Tibial artery (tissue), 4 donors: ENCODE measurements at regions of chr1 and their contacts with region 1.

Region 1: DNA sequence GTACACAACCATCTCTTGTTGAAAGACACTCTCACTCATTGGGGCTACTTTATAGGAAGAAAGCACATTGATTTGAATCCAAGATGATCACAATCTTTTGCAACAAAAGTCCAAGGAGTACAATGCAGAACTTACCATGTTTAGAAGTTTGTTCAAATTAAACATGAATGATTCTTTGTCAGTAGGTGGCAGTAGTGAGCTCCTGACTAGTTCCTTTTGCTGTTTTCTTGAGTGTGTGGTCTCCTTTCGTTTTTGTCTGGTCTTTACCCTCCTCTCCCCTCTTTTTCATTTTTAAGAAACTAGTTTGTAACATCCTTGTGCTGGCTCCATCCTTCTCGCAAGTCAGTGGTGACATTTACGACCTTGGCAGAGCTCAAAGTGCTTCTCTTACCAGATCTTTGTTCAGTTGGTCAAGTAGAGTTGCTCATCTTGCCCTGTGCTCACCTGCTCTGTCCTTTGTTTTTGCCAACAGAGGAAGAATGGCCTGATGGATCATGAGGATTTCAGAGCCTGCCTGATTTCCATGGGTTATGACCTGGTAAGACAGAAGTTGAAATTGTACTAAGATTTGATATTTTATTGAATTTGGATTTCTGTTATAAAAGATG is 35.7 kb upstream of the MTR start:
- DNase-seq: no peak
- H3K4me3 ChIP-seq: no peak overlapping the region
- H3K27ac ChIP-seq: no peak overlapping the region
- H3K4me1 ChIP-seq: no peaks in the 10 kb centered on the region
- H3K27me3 ChIP-seq: no peaks in the 10 kb centered on the region
- CTCF ChIP-seq: peak; percentile 53 to 66

Region 2: DNA sequence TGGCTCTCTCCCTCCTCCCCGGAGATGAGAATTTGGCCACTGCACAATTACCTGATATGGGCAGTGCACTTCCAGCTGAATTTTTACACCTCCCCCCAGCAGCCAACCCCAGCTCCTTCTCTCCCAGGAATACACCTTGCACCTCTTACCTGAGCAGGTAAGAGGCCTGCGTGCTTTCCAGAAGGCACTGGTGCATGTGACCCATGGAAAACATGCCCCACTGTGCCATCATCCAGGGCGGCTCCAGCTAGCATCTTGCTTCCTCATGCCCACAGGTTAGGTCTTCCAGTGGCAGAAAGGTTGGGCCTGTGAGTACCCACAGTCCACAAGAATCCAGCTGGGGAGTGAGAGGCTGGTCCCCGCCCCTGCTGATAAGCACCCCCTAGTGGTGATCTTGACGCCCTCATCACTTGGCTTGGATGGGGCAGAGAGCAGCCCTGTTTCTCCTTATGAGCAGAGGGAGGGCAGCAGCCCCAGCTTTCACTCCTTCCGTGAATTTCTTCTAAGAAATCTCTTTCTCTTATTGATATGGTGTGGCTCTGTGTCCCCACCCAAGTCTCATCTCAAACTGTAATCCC is 307.5 kb before region 1 on chr1:
- intact Hi-C with region 1: no loop called
- DNase-seq: no peak
- H3K4me3 ChIP-seq: no peak overlapping the region
- H3K27ac ChIP-seq: no peak overlapping the region
- H3K4me1 ChIP-seq: no peaks in the 10 kb centered on the region
- H3K27me3 ChIP-seq: no peaks in the 10 kb centered on the region
- CTCF ChIP-seq: no peak

Region 3: DNA sequence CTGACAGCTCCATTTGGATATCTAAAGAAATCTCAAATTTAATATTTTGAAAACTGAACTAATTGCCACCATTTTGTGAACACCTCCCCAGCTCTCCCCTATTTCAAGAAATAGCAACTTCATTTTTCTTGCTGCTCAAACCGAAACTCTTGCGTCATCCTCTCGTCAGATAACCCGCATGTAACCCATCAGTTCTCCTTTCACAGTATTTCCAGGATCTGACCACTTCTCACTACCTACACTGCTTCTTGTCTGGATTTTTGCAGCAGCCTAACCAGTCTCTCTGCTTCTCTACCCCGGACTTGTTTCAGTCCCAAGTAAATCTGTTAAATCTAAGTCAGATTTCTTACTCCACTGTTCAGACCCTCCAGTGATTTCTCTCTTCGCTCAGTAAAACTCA is 111.4 kb after region 1 on chr1:
- intact Hi-C with region 1: loop called (anchors 10 kb)
- DNase-seq: no peak
- H3K4me3 ChIP-seq: no peak overlapping the region
- H3K27ac ChIP-seq: no peak overlapping the region
- H3K4me1 ChIP-seq: no peaks in the 10 kb centered on the region
- H3K27me3 ChIP-seq: no peaks in the 10 kb centered on the region
- CTCF ChIP-seq: no peak

Region 4: GRCh38 chr1:237041795-237042525 is 282.6 kb after region 1 on chr1 and contains the start of gene RYR2:
- intact Hi-C with region 1: no loop called
- DNase-seq: peak in 1 of 2 donors; percentile 76
- H3K4me3 ChIP-seq: peak within 1 kb of the TSS; percentile 74 to 86
- H3K27ac ChIP-seq: peak within 1 kb of the TSS; percentile 82 to 86
- H3K4me1 ChIP-seq: peaks cover 0 to 48% (median 19%) of the 10 kb centered on the region in 4 donors
- H3K27me3 ChIP-seq: peaks cover 0 to 5% of the 10 kb centered on the region in 2 donors
- CTCF ChIP-seq: peak; percentile 40 to 83